ENCODE measurements at regions of chr15 and their contacts with region 1.

Region 1: DNA sequence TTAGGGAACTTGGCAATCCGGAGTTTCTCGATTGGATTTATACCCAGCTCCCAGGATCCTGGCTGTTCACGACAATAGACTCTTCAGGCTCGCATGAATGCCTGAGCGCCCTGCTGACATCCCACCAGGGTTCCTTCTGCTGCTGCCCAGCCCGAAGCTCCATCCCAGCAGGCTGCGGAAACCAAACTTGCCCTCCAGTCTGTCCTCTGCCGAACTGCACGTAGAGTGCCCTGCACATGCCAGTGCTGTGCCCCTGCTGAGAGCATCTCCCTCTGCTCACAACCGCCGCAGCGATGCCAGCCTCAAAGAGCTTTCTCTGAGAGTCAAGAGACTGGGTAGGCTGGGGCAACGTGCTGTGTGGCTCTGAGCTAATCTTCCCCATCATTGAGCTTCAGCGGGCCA is 6.9 kb downstream of the ADAMTS7 start:
- DNase-seq: peak in 4 of 5 donors; percentile 40 to 75 (median 64)
- ATAC-seq: peak in 2 of 4 donors; percentile 62 to 63
- H3K4me3 ChIP-seq: no peak overlapping the region
- H3K27ac ChIP-seq: peak overlapping the region in 8 of 12 donors; percentile 6 to 61 (median 40)
- H3K4me1 ChIP-seq: peaks cover 0 to 27% (median 3%) of the 10 kb centered on the region in 12 donors
- H3K27me3 ChIP-seq: peaks cover 0 to 7% (median 0%) of the 10 kb centered on the region in 9 donors
- CTCF ChIP-seq: no peak
- POLR2A ChIP-seq: no peak

Region 2: GRCh38 chr15:78457101-78457500 is 347.3 kb before region 1 on chr15:
- intact Hi-C with region 1: no loop called
- DNase-seq: no peak
- ATAC-seq: peak in 2 of 4 donors; percentile 12 to 44
- H3K4me3 ChIP-seq: peak overlapping the region in 1 of 12 donors; percentile 11
- H3K27ac ChIP-seq: peak overlapping the region in 9 of 12 donors; percentile 2 to 84 (median 49)
- H3K4me1 ChIP-seq: peaks cover 0 to 80% (median 58%) of the 10 kb centered on the region in 12 donors
- H3K27me3 ChIP-seq: no peaks in the 10 kb centered on the region
- CTCF ChIP-seq: no peak
- POLR2A ChIP-seq: no peak

Region 3: DNA sequence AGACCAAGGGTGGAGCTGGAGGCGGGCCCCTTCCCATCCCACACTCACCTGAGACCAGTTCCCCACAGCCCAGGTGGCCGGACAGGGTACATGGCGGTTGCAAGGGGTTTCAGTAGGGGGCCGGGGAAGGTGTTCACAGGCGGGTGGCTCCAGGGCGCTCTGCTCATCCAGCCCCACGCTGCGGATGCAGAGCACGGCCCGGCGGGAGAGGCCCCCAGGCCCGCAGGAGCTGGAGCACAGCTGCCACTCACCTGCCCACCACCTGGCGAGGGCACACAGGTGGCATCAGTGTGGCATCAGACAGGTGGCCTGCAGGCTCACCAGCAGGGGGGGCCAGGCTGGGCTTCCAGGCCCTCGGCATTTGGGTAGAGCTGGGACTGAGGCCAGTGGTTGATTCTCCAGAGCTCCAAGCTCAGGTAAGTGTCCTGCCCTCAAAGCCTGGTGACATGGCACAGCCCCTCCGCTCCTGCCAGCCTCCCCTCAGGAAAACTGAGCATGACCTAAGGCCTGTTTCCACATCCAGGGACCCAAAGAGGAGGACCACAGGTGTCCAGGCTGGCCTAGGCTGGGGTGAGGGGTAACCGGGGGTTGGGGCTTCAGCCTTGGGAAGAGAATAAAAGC is 37.0 kb before region 1 on chr15:
- intact Hi-C with region 1: loop called in 2 of 10 experiments (anchors 5 kb)
- DNase-seq: peak in 4 of 5 donors; percentile 6 to 38 (median 14)
- ATAC-seq: no peak
- H3K4me3 ChIP-seq: no peak overlapping the region
- H3K27ac ChIP-seq: no peak overlapping the region
- H3K4me1 ChIP-seq: peaks cover 0 to 12% (median 0%) of the 10 kb centered on the region in 12 donors
- H3K27me3 ChIP-seq: no peaks in the 10 kb centered on the region
- CTCF ChIP-seq: no peak
- POLR2A ChIP-seq: no peak

Measured in heart left ventricle (tissue), 16 donors.